Kidney (tissue), 22 donors: ENCODE measurements at regions of chr6 and their contacts with region 1.

Region 1: DNA sequence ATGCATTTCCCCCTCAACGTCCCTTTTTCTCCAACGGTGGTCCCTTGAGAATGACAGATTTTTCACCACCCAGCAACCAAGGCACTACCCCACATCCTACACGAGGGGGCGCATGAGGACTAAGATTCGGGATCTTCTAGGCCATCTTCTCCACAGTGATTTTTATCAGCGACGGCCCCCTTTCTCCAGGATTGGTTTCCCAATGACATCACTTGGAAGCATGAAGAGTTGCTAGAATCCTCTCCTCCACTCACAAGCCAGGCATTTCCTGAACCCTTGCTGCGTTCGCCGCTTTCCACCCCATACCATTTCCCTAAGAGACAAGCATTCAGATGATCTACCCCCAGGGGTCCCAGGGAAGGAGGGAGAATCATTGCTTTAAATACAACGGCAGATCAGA is 252.0 kb downstream of the HIVEP2 start:
- DNase-seq: peak; percentile 77 to 95 (median 80)
- H3K4me3 ChIP-seq: no peak overlapping the region
- H3K27ac ChIP-seq: no peak overlapping the region
- H3K4me1 ChIP-seq: peaks cover 0 to 3% (median 2%) of the 10 kb centered on the region in 3 donors
- H3K27me3 ChIP-seq: no peaks in the 10 kb centered on the region
- CTCF ChIP-seq: peak; percentile 94

Region 2: GRCh38 chr6:142952614-142953013 is 259.7 kb after region 1 on chr6:
- intact Hi-C with region 1: loop called (anchors 10 kb)
- DNase-seq: no peak
- H3K4me3 ChIP-seq: no peak overlapping the region
- H3K27ac ChIP-seq: no peak overlapping the region
- H3K4me1 ChIP-seq: no peaks in the 10 kb centered on the region
- H3K27me3 ChIP-seq: no peaks in the 10 kb centered on the region
- CTCF ChIP-seq: no peak

Region 3: GRCh38 chr6:143026696-143027449 is 333.9 kb after region 1 on chr6:
- intact Hi-C with region 1: loop called (anchors 5 kb)
- DNase-seq: peak in 3 of 5 donors; percentile 20 to 32 (median 27)
- H3K4me3 ChIP-seq: no peak overlapping the region
- H3K27ac ChIP-seq: no peak overlapping the region
- H3K4me1 ChIP-seq: no peaks in the 10 kb centered on the region
- H3K27me3 ChIP-seq: no peaks in the 10 kb centered on the region
- CTCF ChIP-seq: peak; percentile 69

Region 4: DNA sequence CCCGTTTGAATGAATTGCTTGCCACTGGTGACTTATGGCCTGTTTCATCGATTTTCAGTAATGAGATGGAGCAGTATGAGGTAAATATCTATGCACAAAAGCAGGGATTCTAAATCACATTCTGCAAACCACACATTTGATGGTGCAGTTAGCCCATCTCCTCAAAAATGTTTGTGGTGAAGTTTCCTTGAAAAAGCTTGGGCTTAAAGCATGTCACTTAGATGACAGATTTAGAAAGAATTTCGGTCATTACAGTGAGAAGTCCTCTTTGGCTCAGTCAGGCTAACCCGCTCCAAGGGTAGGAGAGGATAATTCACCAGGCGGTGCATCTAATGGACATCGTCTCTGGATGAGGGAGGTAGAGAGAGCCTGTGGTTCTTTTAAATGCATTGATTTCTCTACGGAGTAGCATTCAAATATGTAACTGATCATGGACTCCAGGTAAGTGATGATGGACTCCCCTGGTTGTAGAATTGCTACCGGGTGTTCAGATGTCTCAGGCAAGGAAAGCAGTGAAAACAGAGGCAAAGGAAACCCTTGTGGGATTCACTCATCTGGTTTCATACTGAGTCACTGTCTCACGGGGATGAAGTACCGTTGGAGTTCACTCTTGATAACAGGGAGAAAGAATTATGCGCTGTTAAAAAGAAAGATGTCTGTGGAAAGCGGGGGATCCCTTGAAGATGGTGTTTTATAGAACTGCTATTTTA is 433.1 kb after region 1 on chr6:
- intact Hi-C with region 1: no loop called
- DNase-seq: no peak
- H3K4me3 ChIP-seq: no peak overlapping the region
- H3K27ac ChIP-seq: no peak overlapping the region
- H3K4me1 ChIP-seq: no peaks in the 10 kb centered on the region
- H3K27me3 ChIP-seq: no peaks in the 10 kb centered on the region
- CTCF ChIP-seq: no peak

Region 5: GRCh38 chr6:143427109-143427817 is 734.3 kb after region 1 on chr6:
- intact Hi-C with region 1: loop called (anchors 10 kb)
- DNase-seq: peak; percentile 87 to 93 (median 89)
- H3K4me3 ChIP-seq: no peak overlapping the region
- H3K27ac ChIP-seq: no peak overlapping the region
- H3K4me1 ChIP-seq: no peaks in the 10 kb centered on the region
- H3K27me3 ChIP-seq: no peaks in the 10 kb centered on the region
- CTCF ChIP-seq: peak; percentile 87